Astrocyte of the cerebellum (primary cell): ENCODE measurements at regions of chr6 and their contacts with region 1.

Region 1: DNA sequence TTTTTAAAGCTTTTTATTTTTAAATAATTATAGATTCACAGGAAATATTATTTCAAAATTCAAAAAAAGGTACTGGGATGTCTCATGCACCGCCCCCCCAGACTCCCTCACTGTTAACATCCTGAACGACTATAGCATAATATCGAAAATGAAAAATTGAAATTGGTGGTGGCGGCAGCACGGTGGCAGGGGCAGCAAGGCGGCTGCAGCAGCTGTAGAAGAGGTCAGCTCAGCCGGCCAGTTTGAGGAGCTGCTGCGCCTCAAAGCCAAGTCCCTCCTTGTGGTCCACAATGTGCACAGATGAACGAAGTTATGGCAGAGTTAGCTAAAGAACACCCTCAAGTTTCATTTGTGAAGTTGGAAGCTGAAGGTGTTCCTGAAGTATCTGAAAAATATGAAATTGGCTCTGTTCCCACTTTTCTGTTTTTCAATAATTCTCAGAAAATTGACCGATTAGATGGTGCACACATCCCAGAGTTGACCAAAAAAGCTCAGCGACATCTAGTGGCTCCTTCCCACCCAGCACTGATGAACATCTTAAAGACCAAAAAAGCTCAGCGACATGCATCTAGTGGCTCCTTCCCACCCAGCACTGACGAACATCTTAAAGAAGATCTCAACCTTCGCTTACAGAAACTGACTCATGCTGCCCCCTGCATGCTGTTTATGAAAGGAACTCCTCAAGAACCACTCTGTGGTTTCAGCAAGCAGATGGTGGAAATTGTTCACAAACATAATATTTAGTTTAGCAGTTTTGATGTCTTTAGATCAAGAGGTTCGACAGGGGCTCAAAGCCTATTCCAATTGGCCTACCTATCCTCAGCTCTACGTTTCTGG is 100.8 kb downstream of the FAM217A start:
- DNase-seq: peak; percentile 85
- H3K4me3 ChIP-seq: no peak overlapping the region
- CTCF ChIP-seq: peak; percentile 73

Region 2: GRCh38 chr6:3139090-3139903 is 838.8 kb before region 1 on chr6:
- in situ Hi-C with region 1: loop called (anchors 25 kb)
- DNase-seq: no peak
- H3K4me3 ChIP-seq: no peak overlapping the region
- CTCF ChIP-seq: no peak

Region 3: DNA sequence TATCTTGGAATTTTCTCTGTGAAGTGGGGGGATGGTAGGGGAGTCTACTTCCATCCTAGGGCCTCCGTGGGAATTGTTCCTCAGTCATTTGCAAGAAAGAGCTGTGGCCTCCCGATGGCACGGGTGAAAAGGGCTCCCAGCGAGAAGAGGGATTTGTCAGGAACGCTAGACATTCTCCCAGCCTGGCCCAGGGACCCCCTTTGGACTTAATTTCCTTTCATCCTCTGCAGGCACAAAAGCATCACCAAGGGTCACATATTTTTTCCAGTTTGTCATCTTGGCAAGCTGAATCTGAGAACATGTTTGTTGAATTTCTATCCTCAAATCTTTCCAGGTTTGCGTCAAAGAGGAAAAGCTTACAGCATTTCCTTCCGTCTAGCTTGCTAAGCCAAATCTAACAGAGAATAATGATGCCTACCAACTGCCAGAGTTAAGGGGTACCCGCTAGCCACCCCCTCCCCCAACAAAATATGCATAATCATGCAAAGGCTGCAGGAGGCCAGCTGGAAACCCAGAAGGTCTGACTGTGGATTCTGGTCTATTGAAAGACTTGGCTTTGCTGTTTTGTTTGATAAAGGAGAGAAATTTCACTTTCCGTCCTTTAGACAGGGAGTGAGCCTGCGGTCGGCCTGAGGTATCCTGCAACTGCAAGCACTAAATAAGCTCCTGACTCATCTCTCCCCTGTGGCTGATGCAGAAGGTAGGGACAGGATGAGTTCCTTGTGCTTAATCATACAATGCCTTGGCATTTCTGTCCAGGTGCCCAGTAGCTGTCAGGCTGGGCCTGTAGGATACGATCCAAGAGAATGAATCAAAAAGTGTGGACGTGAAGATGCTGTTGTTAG is 696.2 kb before region 1 on chr6:
- in situ Hi-C with region 1: loop called (anchors 25 kb)
- DNase-seq: peak; percentile 90
- H3K4me3 ChIP-seq: no peak overlapping the region
- CTCF ChIP-seq: no peak

Region 4: GRCh38 chr6:4018172-4018905 is 40.2 kb after region 1 on chr6:
- in situ Hi-C with region 1: no loop called
- DNase-seq: peak; percentile 86
- H3K4me3 ChIP-seq: peak overlapping the region; percentile 69
- CTCF ChIP-seq: peak; percentile 55